ENCODE measurements at regions of chr16 and their contacts with region 1.

Region 1: DNA sequence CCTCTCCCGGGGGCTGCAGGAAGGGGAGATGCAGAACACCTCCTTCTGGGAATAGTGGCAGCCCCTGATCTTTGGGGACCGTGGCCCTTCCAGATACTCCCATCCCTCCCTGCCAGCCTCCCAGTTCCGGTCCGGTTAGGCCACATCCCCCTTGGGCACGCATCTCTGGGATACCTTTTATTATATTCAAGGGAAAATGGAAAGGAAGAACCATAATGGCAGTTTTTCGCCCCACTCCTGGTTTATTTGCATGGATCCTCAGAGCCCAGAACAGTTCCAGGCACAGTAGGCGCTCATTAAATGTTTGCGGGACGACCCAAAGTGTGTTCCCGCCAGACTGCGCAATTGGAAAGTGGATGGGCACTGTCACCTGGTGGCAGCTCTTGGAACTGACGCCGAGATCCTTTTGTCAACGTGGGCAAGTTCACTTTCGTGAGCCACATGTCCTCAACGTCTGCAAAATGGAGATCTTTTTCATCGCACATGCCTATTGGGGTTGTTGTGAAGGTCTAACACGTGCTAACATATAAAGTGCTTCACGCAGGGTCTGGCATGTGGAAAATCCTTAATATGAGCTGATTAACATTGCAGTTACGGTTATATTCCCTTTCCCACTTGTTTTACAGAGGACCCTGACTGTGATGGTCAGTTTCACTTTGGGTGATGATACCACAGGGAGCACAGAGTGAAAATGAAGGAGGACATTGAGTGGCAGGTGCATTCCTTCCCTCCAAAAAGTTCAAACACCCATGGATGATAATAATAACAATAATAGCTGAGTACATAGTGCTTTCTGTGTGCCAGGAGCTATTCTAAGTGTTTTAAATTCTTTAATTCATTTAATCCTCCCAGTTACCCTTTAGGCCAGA is 1.7 kb upstream of the GPRC5B start:
- DNase-seq: peak; percentile 80
- H3K4me3 ChIP-seq: peak overlapping the region; percentile 36; the same call in 1 of the 2 replicates
- H3K27ac ChIP-seq: no peak overlapping the region
- H3K4me1 ChIP-seq: no peaks in the 10 kb centered on the region
- H3K27me3 ChIP-seq: peaks cover 16% of the 10 kb centered on the region

Region 2: DNA sequence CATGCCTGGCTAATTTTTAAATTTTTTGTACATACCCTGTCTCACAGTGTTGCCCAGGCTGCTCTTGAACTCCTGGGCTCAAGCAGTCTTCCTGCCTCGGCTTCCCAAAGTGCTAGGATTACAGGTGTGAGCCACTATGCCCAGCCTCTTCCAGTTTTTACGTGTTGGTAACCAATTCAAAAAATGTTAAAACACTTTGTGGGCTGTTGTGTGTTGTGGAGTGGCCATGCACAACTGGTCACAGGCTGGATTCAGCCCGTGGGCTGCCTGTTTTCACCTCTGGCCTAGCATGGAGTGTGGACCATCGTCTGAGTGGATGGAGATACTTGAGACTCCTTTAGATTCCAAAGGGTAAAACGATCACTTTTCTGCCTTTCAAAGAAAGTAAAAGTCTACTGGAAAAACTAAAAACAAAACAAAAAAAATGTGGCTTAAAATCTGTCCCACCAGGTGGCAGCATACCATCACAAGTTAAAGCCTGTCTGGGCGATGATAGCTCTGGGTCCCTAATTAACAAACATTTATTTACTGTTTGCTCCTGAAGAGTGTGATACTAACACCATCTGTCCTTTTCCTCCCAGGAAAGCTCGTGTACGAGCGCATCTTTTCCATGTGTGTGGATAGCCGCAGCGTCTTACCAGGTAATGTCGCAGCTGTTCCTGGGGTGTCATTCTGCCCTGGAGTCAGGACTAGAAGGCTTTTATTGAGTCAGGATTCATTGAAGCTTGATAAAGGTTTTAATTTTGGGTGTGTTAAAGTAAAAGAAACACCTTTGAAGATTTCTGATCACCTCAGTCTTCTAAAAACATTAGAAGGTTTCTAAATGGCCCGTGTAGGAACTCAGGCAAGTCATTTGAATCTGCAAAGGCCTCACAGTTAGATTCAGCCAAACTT is 285.0 kb before region 1 on chr16:
- in situ Hi-C with region 1: loop called (anchors 10 kb)
- DNase-seq: peak; percentile 64
- H3K4me3 ChIP-seq: no peak overlapping the region
- H3K27ac ChIP-seq: no peak overlapping the region
- H3K4me1 ChIP-seq: 0 out of 2 replicates have a peak, but pooled peaks cover 4% of the 10 kb centered on the region
- H3K27me3 ChIP-seq: no peaks in the 10 kb centered on the region

Region 3: DNA sequence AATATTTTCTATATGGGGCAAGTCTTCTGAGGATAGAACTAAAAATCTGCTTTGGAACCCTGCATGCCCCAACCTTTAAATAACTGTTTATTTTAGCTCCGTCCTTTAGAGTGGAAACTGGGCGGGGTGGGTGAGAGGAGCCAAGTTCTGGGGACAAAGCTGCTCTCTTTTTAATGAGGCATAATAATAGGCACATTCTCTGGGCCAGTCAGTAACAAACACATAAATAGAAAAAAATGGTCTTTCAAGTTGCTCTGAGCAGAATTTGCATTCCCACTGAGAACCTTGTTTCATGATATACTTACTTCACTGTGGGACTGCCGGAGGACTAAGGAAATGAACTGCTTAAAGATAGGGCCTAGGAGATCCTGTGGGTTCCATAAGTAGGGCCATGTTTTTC is 219.8 kb before region 1 on chr16:
- in situ Hi-C with region 1: no loop called
- DNase-seq: no peak
- H3K4me3 ChIP-seq: no peak overlapping the region
- H3K27ac ChIP-seq: no peak overlapping the region
- H3K4me1 ChIP-seq: no peaks in the 10 kb centered on the region
- H3K27me3 ChIP-seq: no peaks in the 10 kb centered on the region

Region 4: DNA sequence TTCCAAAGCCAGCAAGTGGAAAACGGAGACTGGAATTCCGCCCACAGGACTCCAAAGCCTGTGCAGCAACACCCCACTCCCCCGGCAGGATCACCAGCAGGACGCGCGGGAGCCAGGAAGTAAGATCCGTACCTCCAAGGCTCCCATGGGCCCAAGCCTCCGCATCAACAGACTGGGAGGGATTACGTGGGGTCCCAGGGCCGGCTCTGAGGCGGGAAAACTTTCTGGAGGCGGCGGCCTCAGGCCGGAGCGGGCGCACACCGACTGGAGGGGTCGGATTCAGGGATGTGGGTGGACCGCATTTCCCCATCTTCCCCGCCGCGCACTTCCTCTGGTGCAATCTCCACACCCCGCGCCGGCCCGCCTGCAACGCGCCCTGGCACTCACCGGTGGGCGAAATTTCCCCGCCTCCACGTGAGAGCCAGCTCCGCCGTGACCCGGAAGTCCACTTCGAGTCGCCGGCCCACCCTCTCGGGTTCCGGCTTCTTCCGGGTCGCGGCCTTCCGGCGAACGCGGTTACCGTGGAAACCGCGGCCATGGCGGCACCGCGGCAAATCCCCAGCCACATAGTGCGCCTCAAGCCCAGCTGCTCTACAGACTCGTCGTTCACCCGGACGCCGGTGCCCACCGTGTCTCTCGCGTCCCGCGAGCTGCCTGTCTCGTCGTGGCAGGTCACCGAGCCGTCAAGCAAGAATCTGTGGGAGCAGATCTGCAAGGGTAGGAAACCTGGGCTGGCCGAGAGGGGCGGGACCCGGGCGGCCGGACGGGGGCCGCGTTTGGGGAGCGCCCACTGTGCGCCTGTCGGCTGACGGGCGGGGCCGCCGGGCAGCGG is 168.3 kb before region 1 on chr16 and contains the starts of genes IQCK and KNOP1:
- in situ Hi-C with region 1: loop called (anchors 10 kb)
- DNase-seq: peak; percentile 97
- H3K4me3 ChIP-seq: peak within 1 kb of the TSS; percentile 93
- H3K27ac ChIP-seq: peak within 1 kb of the TSS; percentile 86
- H3K4me1 ChIP-seq: peaks cover 13% of the 10 kb centered on the region; the same call in 1 of the 2 replicates
- H3K27me3 ChIP-seq: no peaks in the 10 kb centered on the region
- total RNA-seq, gene IQCK: 9.8 and 24.8 TPM in 2 replicates
- total RNA-seq, gene KNOP1: 8.0 and 11.8 TPM in 2 replicates

Region 5: GRCh38 chr16:19935699-19936098 is 49.4 kb after region 1 on chr16:
- in situ Hi-C with region 1: no loop called
- DNase-seq: no peak
- H3K4me3 ChIP-seq: no peak overlapping the region
- H3K27ac ChIP-seq: no peak overlapping the region
- H3K4me1 ChIP-seq: no peaks in the 10 kb centered on the region
- H3K27me3 ChIP-seq: no peaks in the 10 kb centered on the region; the same call in 1 of the 2 replicates